Endothelial cell of umbilical vein (primary cell): ENCODE measurements at regions of chr12 and their contacts with region 1.

Region 1: GRCh38 chr12:58443273-58443980 is 476.9 kb downstream of the LRIG3 start:
- DNase-seq: peak; percentile 64
- H3K4me3 ChIP-seq: no peak overlapping the region
- H3K27ac ChIP-seq: no peak overlapping the region
- H3K4me1 ChIP-seq: no peaks in the 10 kb centered on the region
- H3K27me3 ChIP-seq: no peaks in the 10 kb centered on the region
- CTCF ChIP-seq: peak; percentile 49 to 54
- POLR2A ChIP-seq: no peak

Region 2: GRCh38 chr12:57983146-57983857 is 460.1 kb before region 1 on chr12:
- CTCF ChIA-PET with region 1: interaction called, 53 read pairs
- POLR2A ChIA-PET with region 1: interaction called, 4 read pairs
- dilution Hi-C with region 1: no loop called
- intact Hi-C with region 1: loop called (anchors 1 kb)
- DNase-seq: peak; percentile 72
- H3K4me3 ChIP-seq: no peak overlapping the region
- H3K27ac ChIP-seq: no peak overlapping the region
- H3K4me1 ChIP-seq: no peaks in the 10 kb centered on the region
- H3K27me3 ChIP-seq: peaks cover 0 to 3% of the 10 kb centered on the region in 2 experiments
- CTCF ChIP-seq: peak; percentile 25 to 55
- POLR2A ChIP-seq: no peak

Region 3: DNA sequence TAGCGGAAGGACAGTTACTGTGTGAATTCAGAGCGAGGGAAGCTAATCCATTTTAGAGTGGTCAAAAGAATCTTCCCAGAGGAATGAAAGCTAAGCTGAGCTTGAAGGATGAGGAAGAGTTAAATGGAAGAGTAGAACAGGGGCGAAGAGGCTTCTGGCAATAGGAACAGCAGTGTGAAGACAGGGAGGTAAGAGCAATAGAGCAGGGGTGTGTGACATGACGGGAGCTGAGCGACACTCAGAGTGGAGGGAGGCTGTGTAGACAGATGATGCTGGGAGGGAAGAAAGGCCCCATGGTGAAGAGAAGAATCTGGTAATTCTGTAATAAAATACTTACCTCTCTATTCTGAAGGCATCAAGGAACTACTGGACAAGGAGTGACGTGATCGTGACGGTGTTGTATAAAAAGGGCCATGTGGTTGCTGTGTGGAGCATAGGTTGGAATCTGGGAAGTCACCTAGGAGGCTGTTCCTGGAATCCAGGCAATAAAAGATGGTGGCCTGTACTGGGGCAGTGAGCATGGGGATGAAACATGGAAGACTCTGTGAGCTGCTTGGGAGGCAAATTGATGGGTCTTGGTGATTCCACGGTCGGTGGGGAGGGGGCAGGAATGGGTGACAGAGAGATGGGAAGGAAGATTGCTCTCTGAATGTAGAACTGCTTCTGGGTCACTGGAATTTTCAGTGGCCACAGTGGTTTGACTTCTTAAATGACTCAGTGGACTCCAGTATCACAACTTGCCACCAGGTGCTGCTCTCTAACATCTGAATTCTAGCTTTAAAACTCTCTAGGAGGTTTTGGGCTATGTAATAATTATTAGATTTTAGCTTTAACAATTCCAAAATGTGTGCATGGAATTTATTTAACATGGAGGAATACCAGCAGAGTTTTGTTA is 338.0 kb before region 1 on chr12:
- CTCF ChIA-PET with region 1: interaction called, 11 read pairs
- POLR2A ChIA-PET with region 1: no interaction called
- dilution Hi-C with region 1: no loop called
- intact Hi-C with region 1: loop called (anchors 5 kb)
- DNase-seq: peak; percentile 41
- H3K4me3 ChIP-seq: no peak overlapping the region
- H3K27ac ChIP-seq: no peak overlapping the region
- H3K4me1 ChIP-seq: no peaks in the 10 kb centered on the region
- H3K27me3 ChIP-seq: peaks cover 0 to 2% of the 10 kb centered on the region in 2 experiments
- CTCF ChIP-seq: peak in 1 of 2 donors; percentile 37
- POLR2A ChIP-seq: no peak

Region 4: DNA sequence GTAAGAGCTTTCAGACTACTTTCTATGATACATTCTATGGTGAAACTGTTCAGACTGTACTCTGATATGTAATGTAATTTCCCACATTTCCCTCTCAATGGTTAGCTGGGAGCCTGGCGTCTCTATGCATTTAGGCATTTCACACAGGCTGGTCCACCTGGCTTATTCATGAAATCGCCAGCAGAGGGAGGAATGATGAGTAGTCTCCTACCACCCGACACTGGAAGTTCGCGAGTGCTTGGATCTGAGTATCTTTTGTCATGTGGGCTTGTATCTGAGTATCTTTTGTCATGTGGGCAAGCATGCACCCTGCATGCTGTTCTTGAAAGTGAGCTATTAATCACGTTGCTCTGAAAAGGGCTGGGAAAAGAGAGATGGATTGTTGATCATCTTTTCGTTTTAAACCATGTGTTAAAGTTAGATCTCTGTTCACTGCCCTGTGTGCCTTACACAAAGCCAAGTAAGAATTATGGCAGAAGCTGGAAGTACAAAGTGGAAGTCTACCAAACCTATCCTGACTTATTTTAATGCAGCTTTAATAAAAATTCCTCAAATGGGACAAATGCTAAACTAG is 267.0 kb before region 1 on chr12:
- CTCF ChIA-PET with region 1: interaction called, 17 read pairs
- POLR2A ChIA-PET with region 1: no interaction called
- dilution Hi-C with region 1: no loop called
- intact Hi-C with region 1: no loop called
- DNase-seq: peak; percentile 14
- H3K4me3 ChIP-seq: no peak overlapping the region
- H3K27ac ChIP-seq: no peak overlapping the region
- H3K4me1 ChIP-seq: no peaks in the 10 kb centered on the region
- H3K27me3 ChIP-seq: peaks cover 0 to 4% of the 10 kb centered on the region in 2 experiments
- CTCF ChIP-seq: peak; percentile 29 to 39
- POLR2A ChIP-seq: no peak

Region 5: DNA sequence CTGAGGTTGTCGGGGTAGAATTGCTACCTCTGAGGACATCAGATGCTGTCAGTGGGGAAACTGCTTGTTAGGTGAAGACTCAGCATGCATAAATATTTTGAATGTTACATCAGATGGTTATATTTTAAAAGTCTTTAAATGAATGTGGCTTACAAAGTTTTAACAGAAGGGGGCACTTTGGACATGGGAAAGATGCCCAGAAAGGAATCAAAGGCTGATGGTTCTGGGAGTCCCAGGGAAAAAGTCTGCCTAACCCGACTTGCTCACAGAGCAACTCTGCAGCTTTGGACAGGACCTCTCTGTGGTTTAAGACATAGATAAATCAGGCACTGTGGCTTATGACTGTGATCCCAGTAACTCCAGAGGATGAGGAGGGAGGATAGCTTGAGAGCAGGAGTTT is 27.2 kb before region 1 on chr12:
- CTCF ChIA-PET with region 1: interaction called, 67 read pairs
- POLR2A ChIA-PET with region 1: no interaction called
- dilution Hi-C with region 1: no loop called
- intact Hi-C with region 1: loop called (anchors 1 kb)
- DNase-seq: peak; percentile 41
- H3K4me3 ChIP-seq: no peak overlapping the region
- H3K27ac ChIP-seq: no peak overlapping the region
- H3K4me1 ChIP-seq: peaks cover 15% of the 10 kb centered on the region
- H3K27me3 ChIP-seq: no peaks in the 10 kb centered on the region
- CTCF ChIP-seq: no peak
- POLR2A ChIP-seq: no peak

Region 6: DNA sequence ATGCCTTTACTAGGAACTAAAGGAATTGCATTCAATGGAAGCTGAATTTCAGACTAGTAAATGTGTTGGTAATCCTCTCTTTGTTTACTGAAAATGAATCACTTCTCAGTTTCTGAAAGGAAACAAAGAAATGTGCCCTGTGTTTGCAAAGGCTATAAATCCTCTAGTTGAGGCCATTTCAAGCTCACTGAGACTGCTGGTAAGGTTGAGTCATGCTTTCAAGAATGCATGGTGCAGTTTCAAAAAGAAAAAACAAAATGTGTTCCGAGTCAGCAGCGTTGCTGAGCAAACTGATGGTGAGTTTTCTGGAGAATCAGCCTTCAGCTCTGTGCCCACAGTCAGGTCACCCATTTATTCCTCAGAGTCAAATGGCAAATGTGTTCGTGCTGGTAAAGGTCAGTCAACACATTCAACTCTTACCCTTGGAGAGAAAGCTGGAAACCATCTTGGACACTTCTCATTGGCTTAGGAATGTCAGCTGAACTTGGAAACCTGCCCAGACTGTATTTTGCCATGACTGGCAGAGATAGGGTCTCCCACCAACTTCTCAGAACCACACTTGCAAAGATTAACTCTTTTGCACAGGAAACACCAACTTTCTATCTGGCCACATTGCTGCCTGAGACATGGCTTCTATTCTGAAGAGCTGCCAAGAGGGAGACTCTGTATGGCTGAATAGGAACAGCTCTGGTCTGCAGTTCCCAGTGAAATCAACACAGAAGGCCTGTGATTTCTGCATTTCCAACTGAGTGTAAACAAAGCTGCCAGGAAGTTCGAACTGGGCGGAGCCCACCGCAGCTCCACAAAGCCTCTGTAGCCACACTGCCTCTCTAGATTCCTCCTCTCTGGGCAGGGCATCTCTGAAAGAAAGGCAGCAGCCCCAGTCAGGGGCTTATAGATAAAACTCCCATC is 17.7 kb before region 1 on chr12:
- CTCF ChIA-PET with region 1: interaction called, 66 read pairs
- POLR2A ChIA-PET with region 1: no interaction called
- dilution Hi-C with region 1: no loop called
- intact Hi-C with region 1: no loop called
- DNase-seq: peak; percentile 95
- H3K4me3 ChIP-seq: peak overlapping the region in 1 of 3 experiments; percentile 1
- H3K27ac ChIP-seq: peak overlapping the region; percentile 85
- H3K4me1 ChIP-seq: peaks cover 25% of the 10 kb centered on the region
- H3K27me3 ChIP-seq: no peaks in the 10 kb centered on the region
- CTCF ChIP-seq: no peak
- POLR2A ChIP-seq: no peak

Region 7: GRCh38 chr12:59164991-59165718 is 721.7 kb after region 1 on chr12:
- CTCF ChIA-PET with region 1: interaction called, 12 read pairs
- POLR2A ChIA-PET with region 1: no interaction called
- dilution Hi-C with region 1: no loop called
- intact Hi-C with region 1: no loop called
- DNase-seq: peak; percentile 41
- H3K4me3 ChIP-seq: no peak overlapping the region
- H3K27ac ChIP-seq: no peak overlapping the region
- H3K4me1 ChIP-seq: no peaks in the 10 kb centered on the region
- H3K27me3 ChIP-seq: no peaks in the 10 kb centered on the region
- CTCF ChIP-seq: peak; percentile 17 to 30
- POLR2A ChIP-seq: no peak